ENCODE measurements at regions of chr3 and their contacts with region 1.

Region 1: GRCh38 chr3:132343018-132343612 is 25.9 kb downstream of the ACP3 start:
- DNase-seq: peak; percentile 16 to 55 (median 24)
- ATAC-seq: peak; percentile 72
- H3K4me3 ChIP-seq: no peak overlapping the region
- H3K27ac ChIP-seq: no peak overlapping the region
- H3K4me1 ChIP-seq: no peaks in the 10 kb centered on the region
- H3K27me3 ChIP-seq: no peaks in the 10 kb centered on the region; a peak in 1 of 5 replicates
- CTCF ChIP-seq: peak; percentile 54 to 73 (median 58)
- EP300 ChIP-seq: no peak
- POLR2A ChIP-seq: no peak
- RAD21 ChIP-seq: peak; percentile 64 to 70

Region 2: DNA sequence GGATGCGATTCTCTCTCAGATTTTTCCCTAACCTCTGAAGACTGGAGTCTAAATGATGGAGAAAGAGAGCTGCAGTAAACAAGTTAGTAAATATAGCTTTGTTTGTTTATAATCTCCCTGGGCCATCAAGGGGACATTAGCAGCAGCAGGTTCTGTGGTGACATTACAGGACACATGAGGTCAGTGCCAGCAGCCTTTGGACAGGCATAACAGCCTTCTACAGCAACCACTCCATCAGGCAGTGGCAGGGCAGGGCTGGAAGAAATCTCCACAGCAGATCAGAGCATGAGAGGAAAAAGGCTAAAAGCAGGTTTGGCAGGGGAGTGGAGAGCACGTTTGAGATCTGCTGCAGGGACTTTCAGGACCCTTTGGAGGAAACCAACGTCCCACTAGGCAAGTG is 153.5 kb before region 1 on chr3:
- CTCF ChIA-PET with region 1: no interaction called
- POLR2A ChIA-PET with region 1: no interaction called
- in situ Hi-C with region 1: no loop called
- intact Hi-C with region 1: loop called (anchors 5 kb)
- DNase-seq: no peak
- ATAC-seq: no peak
- H3K4me3 ChIP-seq: no peak overlapping the region
- H3K27ac ChIP-seq: no peak overlapping the region
- H3K4me1 ChIP-seq: no peaks in the 10 kb centered on the region
- H3K27me3 ChIP-seq: no peaks in the 10 kb centered on the region
- CTCF ChIP-seq: no peak
- EP300 ChIP-seq: no peak
- POLR2A ChIP-seq: no peak
- RAD21 ChIP-seq: no peak

Region 3: DNA sequence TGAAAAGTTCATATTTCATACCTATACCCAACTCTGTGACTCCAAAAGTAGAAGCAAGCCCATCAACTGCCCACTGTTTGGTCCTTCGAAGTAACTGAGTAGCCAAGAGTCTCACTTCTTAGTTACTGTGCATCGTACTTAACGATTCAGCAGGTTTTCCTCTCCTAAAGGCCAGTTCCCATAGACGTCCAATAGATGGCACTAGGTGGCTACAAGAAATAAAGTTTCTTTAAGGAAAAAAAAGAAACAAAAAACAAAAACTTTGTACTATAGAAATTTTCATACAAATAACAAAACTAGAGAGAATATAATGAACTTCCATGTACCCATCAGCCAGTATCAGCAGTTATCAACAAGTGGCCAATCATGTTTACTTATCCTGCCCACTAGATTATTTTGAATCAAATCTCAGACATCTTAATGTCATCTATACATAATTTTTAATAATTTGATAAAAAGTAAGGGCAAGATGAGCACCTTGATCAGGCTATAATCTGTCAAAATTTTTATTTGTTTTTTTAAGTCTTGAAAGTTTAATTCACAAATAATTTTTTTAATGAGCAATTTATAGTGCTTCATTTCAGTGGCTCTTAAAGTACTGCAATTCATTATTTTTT is 89.7 kb before region 1 on chr3:
- CTCF ChIA-PET with region 1: interaction called, 19 read pairs
- POLR2A ChIA-PET with region 1: no interaction called
- in situ Hi-C with region 1: loop called (anchors 5 kb)
- intact Hi-C with region 1: loop called (anchors 1 kb)
- DNase-seq: peak in 3 of 4 experiments; percentile 11 to 54 (median 32)
- ATAC-seq: peak; percentile 67; the same call in 2 of the 3 replicates
- H3K4me3 ChIP-seq: no peak overlapping the region
- H3K27ac ChIP-seq: no peak overlapping the region
- H3K4me1 ChIP-seq: no peaks in the 10 kb centered on the region
- H3K27me3 ChIP-seq: no peaks in the 10 kb centered on the region
- CTCF ChIP-seq: peak; percentile 50 to 67 (median 51); a peak in 5 of 6 replicates
- EP300 ChIP-seq: no peak
- POLR2A ChIP-seq: no peak
- RAD21 ChIP-seq: peak; percentile 50 to 56

Measured in K562 (cell line).